Right ventricle myocardium inferior (tissue), 1 donor: ENCODE measurements at regions of chr4 and their contacts with region 1.

Region 1: GRCh38 chr4:113179996-113180395 is 130.5 kb downstream of the ANK2 start:
- DNase-seq: no peak
- ATAC-seq: no peak

Region 2: GRCh38 chr4:113146876-113147358 is 33.1 kb before region 1 on chr4:
- intact Hi-C with region 1: loop called (anchors 2 kb)
- DNase-seq: no peak
- ATAC-seq: peak; percentile 72